ENCODE measurements at regions of chr5 and their contacts with region 1.

Region 1: DNA sequence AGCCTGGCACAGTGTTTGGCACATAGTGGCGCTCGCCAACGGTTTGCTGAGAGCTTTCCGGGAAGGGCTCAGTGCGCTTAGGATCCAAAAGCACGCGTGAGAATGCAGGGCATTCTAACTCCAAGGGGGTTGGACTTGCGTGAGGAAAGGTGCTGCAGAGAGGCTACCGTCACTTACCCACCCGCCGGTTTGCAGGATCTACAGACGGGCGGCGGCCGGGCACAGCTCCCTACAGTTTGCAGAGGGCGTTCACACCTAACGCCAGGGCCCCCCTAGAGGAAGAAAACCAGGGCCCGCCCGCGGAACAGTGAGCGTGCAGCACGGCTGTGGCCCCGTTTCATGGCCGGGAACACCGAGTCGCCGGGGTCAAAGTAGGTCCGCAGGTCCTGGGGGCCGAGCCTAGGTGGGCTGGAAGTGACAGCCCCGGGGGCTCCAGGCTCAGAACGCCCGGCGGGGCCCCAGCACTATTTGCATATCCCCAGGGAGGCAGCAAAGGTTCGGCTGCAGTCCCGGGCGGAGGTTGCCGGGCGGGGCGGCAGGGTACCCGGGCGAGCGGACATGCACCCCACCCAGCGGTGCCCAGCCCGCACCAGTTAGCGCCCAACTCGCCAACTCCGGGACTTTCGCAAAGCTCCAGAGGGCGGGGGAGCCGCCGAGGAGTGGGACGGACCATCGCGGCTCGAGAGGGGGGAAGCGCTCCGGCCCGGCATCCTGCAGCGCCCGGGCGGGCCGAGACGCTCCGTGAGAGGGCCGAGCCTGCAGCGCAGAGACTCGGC is 526 bp upstream of the GALNT10 start:
- DNase-seq: peak; percentile 84
- ATAC-seq: peak; percentile 86
- H3K4me3 Mint-ChIP-seq: peak overlapping the region; percentile 86
- H3K27ac Mint-ChIP-seq: peak overlapping the region; percentile 72
- H3K4me1 Mint-ChIP-seq: peaks cover 50% of the 10 kb centered on the region
- H3K27me3 Mint-ChIP-seq: no peaks in the 10 kb centered on the region
- CTCF ChIP-seq: no peak

Region 2: GRCh38 chr5:154038707-154039457 is 151.1 kb before region 1 on chr5 and contains the starts of genes FAM114A2 and MFAP3:
- CTCF ChIA-PET with region 1: no interaction called
- POLR2A ChIA-PET with region 1: interaction called, 23 read pairs
- intact Hi-C with region 1: loop called (anchors 1 kb)
- DNase-seq: peak; percentile 77
- ATAC-seq: peak; percentile 98
- H3K4me3 Mint-ChIP-seq: peak within 1 kb of the TSS; percentile 97
- H3K27ac Mint-ChIP-seq: peak within 1 kb of the TSS; percentile 96
- H3K4me1 Mint-ChIP-seq: peaks cover 45% of the 10 kb centered on the region
- H3K27me3 Mint-ChIP-seq: no peaks in the 10 kb centered on the region
- CTCF ChIP-seq: no peak
- total RNA-seq, gene FAM114A2: 27.4 and 30.5 TPM in 2 replicates
- total RNA-seq, gene MFAP3: 18.4 and 20.8 TPM in 2 replicates

Region 3: GRCh38 chr5:154221371-154221896 is 31.4 kb after region 1 on chr5:
- CTCF ChIA-PET with region 1: interaction called, 4 read pairs
- POLR2A ChIA-PET with region 1: interaction called, 4 read pairs
- intact Hi-C with region 1: loop called (anchors 1 kb)
- DNase-seq: no peak
- ATAC-seq: peak; percentile 60
- H3K4me3 Mint-ChIP-seq: no peak overlapping the region
- H3K27ac Mint-ChIP-seq: peak overlapping the region; percentile 82
- H3K4me1 Mint-ChIP-seq: peaks cover 27% of the 10 kb centered on the region
- H3K27me3 Mint-ChIP-seq: no peaks in the 10 kb centered on the region
- CTCF ChIP-seq: no peak

Region 4: GRCh38 chr5:154284433-154284832 is 94.4 kb after region 1 on chr5:
- CTCF ChIA-PET with region 1: interaction called, 5 read pairs
- POLR2A ChIA-PET with region 1: interaction called, 16 read pairs
- intact Hi-C with region 1: loop called (anchors 5 kb)
- DNase-seq: no peak
- ATAC-seq: peak; percentile 97
- H3K4me3 Mint-ChIP-seq: no peak overlapping the region
- H3K27ac Mint-ChIP-seq: peak overlapping the region; percentile 47
- H3K4me1 Mint-ChIP-seq: peaks cover 45% of the 10 kb centered on the region
- H3K27me3 Mint-ChIP-seq: no peaks in the 10 kb centered on the region
- CTCF ChIP-seq: no peak

Region 5: GRCh38 chr5:154405078-154405792 is 215.2 kb after region 1 on chr5:
- CTCF ChIA-PET with region 1: interaction called, 15 read pairs
- POLR2A ChIA-PET with region 1: interaction called, 11 read pairs
- intact Hi-C with region 1: loop called (anchors 1 kb)
- DNase-seq: peak; percentile 67
- ATAC-seq: peak; percentile 100
- H3K4me3 Mint-ChIP-seq: peak overlapping the region; percentile 77
- H3K27ac Mint-ChIP-seq: no peak overlapping the region
- H3K4me1 Mint-ChIP-seq: peaks cover 7% of the 10 kb centered on the region
- H3K27me3 Mint-ChIP-seq: no peaks in the 10 kb centered on the region
- CTCF ChIP-seq: no peak

Region 6: GRCh38 chr5:154754460-154755360 is 564.7 kb after region 1 on chr5:
- CTCF ChIA-PET with region 1: no interaction called
- POLR2A ChIA-PET with region 1: no interaction called
- intact Hi-C with region 1: loop called (anchors 1 kb)
- DNase-seq: peak; percentile 97
- ATAC-seq: peak; percentile 88
- H3K4me3 Mint-ChIP-seq: peak overlapping the region; percentile 82
- H3K27ac Mint-ChIP-seq: peak overlapping the region; percentile 93
- H3K4me1 Mint-ChIP-seq: peaks cover 44% of the 10 kb centered on the region
- H3K27me3 Mint-ChIP-seq: no peaks in the 10 kb centered on the region
- CTCF ChIP-seq: no peak

Region 7: DNA sequence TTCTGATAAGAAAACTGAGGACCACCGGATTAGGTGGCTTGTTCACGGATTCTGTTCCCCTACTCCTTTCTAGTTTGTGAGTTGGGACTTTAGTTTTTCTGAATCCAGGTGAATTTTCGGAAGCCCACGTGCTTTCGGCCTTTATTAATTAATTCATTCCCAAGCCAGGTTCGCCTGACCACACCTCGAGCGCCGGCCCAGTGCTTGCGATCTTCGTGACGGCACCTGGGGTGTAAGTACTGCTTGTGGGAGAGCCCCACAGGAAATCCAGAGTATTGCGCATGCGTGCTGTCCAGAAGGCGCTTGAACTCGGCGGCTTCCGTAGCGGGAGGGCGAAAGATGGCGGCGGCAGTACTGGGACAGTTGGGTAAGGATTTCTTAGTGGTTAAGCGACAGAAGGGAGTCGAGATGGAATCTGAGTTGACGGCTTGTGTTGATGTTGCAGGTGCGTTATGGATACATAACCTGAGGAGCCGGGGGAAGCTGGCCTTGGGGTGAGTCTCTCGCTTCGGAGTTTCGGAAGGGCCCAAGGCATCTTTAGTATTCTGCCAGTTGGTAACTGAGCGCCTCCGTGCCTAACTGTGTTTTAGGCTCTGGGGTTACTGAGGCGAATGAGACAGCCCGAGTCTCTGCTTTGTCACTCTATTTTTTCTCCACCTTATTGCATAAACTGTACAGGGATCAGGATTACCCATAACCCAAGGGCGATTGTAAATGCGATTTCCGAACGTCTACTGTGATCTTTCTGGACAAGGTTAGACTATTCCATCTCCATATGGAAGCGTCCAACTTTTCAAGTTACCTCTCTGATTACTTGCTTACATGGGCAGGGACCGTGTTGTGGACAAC is 751.0 kb after region 1 on chr5 and contains the start of gene MRPL22:
- CTCF ChIA-PET with region 1: no interaction called
- POLR2A ChIA-PET with region 1: no interaction called
- intact Hi-C with region 1: loop called (anchors 5 kb)
- DNase-seq: peak; percentile 88
- ATAC-seq: peak; percentile 63
- H3K4me3 Mint-ChIP-seq: peak within 1 kb of the TSS; percentile 99
- H3K27ac Mint-ChIP-seq: peak within 1 kb of the TSS; percentile 97
- H3K4me1 Mint-ChIP-seq: peaks cover 49% of the 10 kb centered on the region
- H3K27me3 Mint-ChIP-seq: no peaks in the 10 kb centered on the region
- CTCF ChIP-seq: no peak
- total RNA-seq, gene MRPL22: 41.9 and 42.6 TPM in 2 replicates